ENCODE measurements at regions of chr5 and their contacts with region 1.

Region 1: DNA sequence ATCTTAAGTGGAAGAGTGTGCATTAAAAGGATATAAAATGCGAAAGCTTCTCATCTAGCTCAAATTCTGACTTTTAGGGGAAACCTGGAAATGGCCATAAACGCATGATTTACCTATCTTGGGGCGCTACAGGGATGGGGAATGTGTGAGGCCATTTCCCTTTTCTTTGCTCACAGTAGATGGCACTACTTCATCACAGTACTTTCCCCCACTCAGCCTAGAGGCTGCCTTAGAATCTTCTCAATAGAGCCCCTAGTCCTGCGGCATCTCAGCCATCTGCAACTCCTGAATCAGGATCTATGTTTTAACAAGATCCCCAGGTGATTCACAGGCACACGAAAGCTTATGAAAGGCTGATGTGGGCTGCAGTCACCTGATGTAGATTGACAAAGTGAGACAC is 110.8 kb downstream of the LHFPL2 start:
- DNase-seq: peak; percentile 65
- ATAC-seq: peak; percentile 89
- H3K4me3 ChIP-seq: no peak overlapping the region
- H3K27ac ChIP-seq: peak overlapping the region; percentile 40
- H3K4me1 ChIP-seq: peaks cover 7% of the 10 kb centered on the region
- H3K27me3 ChIP-seq: no peaks in the 10 kb centered on the region
- CTCF ChIP-seq: peak; percentile 62

Region 2: DNA sequence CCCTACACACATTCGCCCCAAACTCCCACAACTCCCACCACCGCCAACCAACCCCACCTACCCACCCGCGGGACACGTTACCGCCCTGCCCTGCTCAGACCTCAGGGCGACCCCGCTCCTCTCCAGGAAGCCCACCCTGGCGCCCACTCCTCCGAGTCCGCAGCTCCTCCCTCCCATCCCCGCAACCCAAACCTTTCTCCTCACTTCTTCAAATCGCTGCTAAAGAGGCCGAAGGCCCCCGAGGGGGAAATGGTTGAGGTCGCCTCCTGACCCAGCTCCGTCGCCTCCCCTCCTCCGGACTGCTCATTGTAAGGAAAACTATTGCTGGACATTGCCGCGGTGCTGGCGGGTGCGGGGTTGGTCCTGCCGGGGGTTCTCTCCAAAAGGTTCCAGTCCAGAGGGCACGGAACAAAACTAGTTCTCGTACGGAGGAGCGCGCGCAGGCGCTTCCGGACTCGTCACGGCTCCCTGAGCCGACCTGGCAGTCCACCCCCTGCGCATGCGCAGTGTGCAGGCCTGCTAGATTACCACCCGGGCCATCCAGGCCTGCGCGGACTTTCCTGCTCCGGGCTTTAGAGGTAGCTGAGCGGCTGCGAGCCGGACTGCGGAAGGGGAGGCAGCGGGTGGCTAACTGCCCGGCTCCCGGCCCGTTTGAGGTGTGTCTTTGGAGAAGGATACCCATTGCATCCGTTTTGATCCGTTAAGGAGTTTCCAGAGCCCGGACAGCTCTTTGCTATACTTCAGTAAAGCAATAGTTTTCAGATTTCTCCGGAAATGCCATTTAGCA is 243.4 kb before region 1 on chr5 and contains the start of gene AP3B1:
- CTCF ChIA-PET with region 1: no interaction called
- POLR2A ChIA-PET with region 1: no interaction called
- intact Hi-C with region 1: no loop called
- DNase-seq: peak; percentile 98
- ATAC-seq: peak; percentile 90
- H3K4me3 ChIP-seq: peak within 1 kb of the TSS; percentile 98
- H3K27ac ChIP-seq: no peak within 1 kb of the TSS
- H3K4me1 ChIP-seq: peaks cover 5% of the 10 kb centered on the region; the same call in 1 of the 2 replicates
- H3K27me3 ChIP-seq: no peaks in the 10 kb centered on the region
- CTCF ChIP-seq: no peak
- total RNA-seq, gene AP3B1: 25.7 and 26.3 TPM in 2 replicates

Region 3: GRCh38 chr5:78320401-78320800 is 217.4 kb before region 1 on chr5:
- CTCF ChIA-PET with region 1: interaction called, 3 read pairs
- POLR2A ChIA-PET with region 1: no interaction called
- intact Hi-C with region 1: loop called (anchors 5 kb)
- DNase-seq: peak; percentile 42
- ATAC-seq: 0 out of 2 replicates have a peak, but pooled peaks have one; percentile 27
- H3K4me3 ChIP-seq: no peak overlapping the region
- H3K27ac ChIP-seq: no peak overlapping the region
- H3K4me1 ChIP-seq: no peaks in the 10 kb centered on the region
- H3K27me3 ChIP-seq: no peaks in the 10 kb centered on the region
- CTCF ChIP-seq: peak; percentile 67

Region 4: GRCh38 chr5:78566747-78567425 is 29.1 kb after region 1 on chr5:
- CTCF ChIA-PET with region 1: no interaction called
- POLR2A ChIA-PET with region 1: no interaction called
- intact Hi-C with region 1: no loop called
- DNase-seq: peak; percentile 23
- ATAC-seq: peak; percentile 42
- H3K4me3 ChIP-seq: no peak overlapping the region
- H3K27ac ChIP-seq: peak overlapping the region; percentile 22
- H3K4me1 ChIP-seq: peaks cover 16% of the 10 kb centered on the region
- H3K27me3 ChIP-seq: no peaks in the 10 kb centered on the region
- CTCF ChIP-seq: no peak

Region 5: GRCh38 chr5:78594610-78595457 is 57.0 kb after region 1 on chr5:
- CTCF ChIA-PET with region 1: no interaction called
- POLR2A ChIA-PET with region 1: no interaction called
- intact Hi-C with region 1: loop called (anchors 5 kb)
- DNase-seq: peak; percentile 93
- ATAC-seq: peak; percentile 66
- H3K4me3 ChIP-seq: no peak overlapping the region
- H3K27ac ChIP-seq: peak overlapping the region; percentile 99
- H3K4me1 ChIP-seq: peaks cover 87% of the 10 kb centered on the region
- H3K27me3 ChIP-seq: no peaks in the 10 kb centered on the region
- CTCF ChIP-seq: no peak

Region 6: GRCh38 chr5:78648359-78649210 is 110.8 kb after region 1 on chr5 and contains the start of gene LHFPL2:
- CTCF ChIA-PET with region 1: no interaction called
- POLR2A ChIA-PET with region 1: no interaction called
- intact Hi-C with region 1: loop called (anchors 5 kb)
- DNase-seq: peak; percentile 59
- ATAC-seq: peak; percentile 74
- H3K4me3 ChIP-seq: peak within 1 kb of the TSS; percentile 77
- H3K27ac ChIP-seq: peak within 1 kb of the TSS; percentile 70
- H3K4me1 ChIP-seq: peaks cover 26% of the 10 kb centered on the region
- H3K27me3 ChIP-seq: no peaks in the 10 kb centered on the region
- CTCF ChIP-seq: no peak
- total RNA-seq, gene LHFPL2: 19.4 and 21.7 TPM in 2 replicates

Region 7: DNA sequence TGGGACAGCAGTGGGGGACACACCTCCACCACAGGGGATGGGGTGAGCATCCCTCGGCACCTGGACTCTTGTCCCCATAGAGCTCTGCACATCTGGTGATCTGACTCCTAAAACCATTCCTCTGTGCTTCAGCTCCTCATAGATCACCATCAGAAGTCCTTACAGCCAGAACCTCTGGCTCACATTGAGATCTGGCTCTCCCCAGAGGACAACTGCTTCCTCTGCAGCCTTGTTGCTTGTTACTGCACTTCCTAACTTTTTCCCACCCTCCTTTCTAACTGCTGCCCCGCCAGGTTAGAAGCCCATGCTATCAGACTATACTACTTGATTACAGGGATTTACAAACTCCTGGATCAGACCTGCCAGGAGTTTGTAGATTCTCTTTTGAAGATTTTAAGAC is 382.8 kb after region 1 on chr5:
- CTCF ChIA-PET with region 1: no interaction called
- POLR2A ChIA-PET with region 1: no interaction called
- intact Hi-C with region 1: loop called (anchors 1 kb)
- DNase-seq: peak; percentile 3
- ATAC-seq: peak; percentile 51
- H3K4me3 ChIP-seq: no peak overlapping the region
- H3K27ac ChIP-seq: no peak overlapping the region
- H3K4me1 ChIP-seq: no peaks in the 10 kb centered on the region
- H3K27me3 ChIP-seq: no peaks in the 10 kb centered on the region
- CTCF ChIP-seq: peak; percentile 35; the same call in 1 of the 2 replicates

Measured in PC-3 (cell line).